Uterus (tissue), 4 donors: ENCODE measurements at regions of chr13 and their contacts with region 1.

Region 1: DNA sequence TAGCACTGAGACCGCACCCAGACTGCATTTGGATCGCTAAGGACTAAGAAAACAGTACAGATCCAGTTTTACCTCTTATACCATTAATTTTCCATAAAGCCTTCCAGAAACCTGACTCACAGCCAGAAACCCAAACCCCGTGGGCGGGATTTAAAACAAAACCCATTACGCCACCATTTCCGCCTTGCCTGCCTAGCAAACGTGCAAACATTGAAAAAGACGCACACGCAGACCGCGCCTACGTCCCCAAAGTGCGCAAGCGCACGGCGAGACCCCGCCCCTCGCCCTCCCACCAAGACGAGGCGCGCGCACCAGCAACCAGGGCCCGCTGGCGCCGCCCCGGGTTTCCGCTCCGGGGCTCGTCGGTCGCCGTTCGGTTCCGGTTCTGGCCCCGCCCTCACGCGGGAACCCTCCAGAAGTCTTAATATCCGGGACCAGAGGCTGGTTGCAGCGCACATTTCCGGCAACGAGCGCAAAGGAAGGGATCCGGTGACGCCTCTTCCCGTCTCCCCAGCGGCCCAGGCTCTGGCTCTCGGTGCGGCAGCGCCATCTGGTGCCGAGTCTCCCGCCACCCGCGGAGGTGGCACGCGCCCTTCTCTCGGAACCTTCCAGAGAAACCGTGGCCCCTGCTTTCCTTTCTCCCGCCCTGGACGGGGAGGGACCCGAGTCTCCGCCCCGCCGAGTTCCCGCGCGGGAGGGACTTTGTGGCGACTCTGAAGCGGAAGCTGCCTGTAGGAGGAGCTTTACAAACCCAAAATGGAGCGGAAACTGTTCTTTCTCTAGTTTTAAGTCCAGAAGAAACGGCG is 256.9 kb upstream of the STARD13 start:
- DNase-seq: peak; percentile 99
- H3K4me3 ChIP-seq: peak overlapping the region; percentile 43 to 47
- H3K27ac ChIP-seq: peak overlapping the region; percentile 94 to 97
- H3K4me1 ChIP-seq: peaks cover 0 to 6% of the 10 kb centered on the region in 2 donors
- H3K27me3 ChIP-seq: no peaks in the 10 kb centered on the region
- CTCF ChIP-seq: peak; percentile 87 to 99 (median 97)
- POLR2A ChIP-seq: peak; percentile 66 to 85

Region 2: GRCh38 chr13:33285420-33286124 is 256.9 kb before region 1 on chr13 and contains the start of gene STARD13:
- intact Hi-C with region 1: loop called (anchors 5 kb)
- DNase-seq: peak; percentile 94 to 97
- H3K4me3 ChIP-seq: peak within 1 kb of the TSS; percentile 56 to 62
- H3K27ac ChIP-seq: peak within 1 kb of the TSS; percentile 94 to 98
- H3K4me1 ChIP-seq: peaks cover 0 to 6% of the 10 kb centered on the region in 2 donors
- H3K27me3 ChIP-seq: no peaks in the 10 kb centered on the region
- CTCF ChIP-seq: peak; percentile 40 to 79 (median 58)
- POLR2A ChIP-seq: peak; percentile 79 to 93
- total RNA-seq, gene STARD13: 36.8 to 65.6 (median 46.0) TPM

Region 3: GRCh38 chr13:33349986-33350826 is 192.3 kb before region 1 on chr13:
- intact Hi-C with region 1: loop called (anchors 5 kb)
- DNase-seq: peak; percentile 69 to 70
- H3K4me3 ChIP-seq: peak overlapping the region; percentile 81 to 88
- H3K27ac ChIP-seq: peak overlapping the region; percentile 94 to 95
- H3K4me1 ChIP-seq: no peaks in the 10 kb centered on the region
- H3K27me3 ChIP-seq: no peaks in the 10 kb centered on the region
- CTCF ChIP-seq: no peak
- POLR2A ChIP-seq: peak in 1 of 2 donors; percentile 20